ENCODE measurements at regions of chr12 and their contacts with region 1.

Region 1: DNA sequence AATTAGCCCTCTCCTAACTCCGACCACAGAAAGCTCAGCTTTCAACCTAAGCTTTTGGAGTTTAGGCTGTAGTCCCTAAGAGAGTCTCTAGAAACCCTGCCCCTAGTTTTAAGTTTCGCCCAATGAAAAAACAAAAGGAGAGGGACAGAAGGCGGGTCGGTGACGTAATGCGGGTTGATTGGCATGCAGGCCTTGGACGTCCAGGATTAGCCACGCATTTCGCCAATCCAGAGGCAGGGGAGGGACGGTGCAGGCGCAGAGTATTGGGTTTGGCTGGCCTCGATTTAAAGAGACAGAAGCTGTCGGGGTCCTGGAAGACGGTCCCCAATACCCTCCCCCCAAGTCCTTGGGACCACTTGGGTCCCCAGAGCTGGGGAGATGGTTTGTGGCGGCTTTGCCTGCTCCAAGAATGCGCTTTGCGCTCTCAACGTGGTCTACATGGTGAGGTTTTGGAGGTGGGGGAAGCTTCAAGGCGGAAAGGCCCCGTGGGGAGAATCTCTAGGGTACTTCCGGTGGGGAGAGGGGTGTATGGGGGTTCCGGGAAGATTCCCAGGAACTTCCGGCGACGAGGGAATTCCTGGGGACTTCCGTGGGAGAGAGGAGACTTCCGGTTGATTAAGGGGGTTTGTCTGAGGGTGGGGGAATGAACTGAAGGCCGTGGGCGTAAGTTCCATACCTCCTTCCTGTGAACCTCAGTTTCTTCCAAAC is at the start of gene TSPAN31:
- DNase-seq: peak; percentile 90
- H3K4me3 Mint-ChIP-seq: peak within 1 kb of the TSS; percentile 94
- H3K27ac Mint-ChIP-seq: peak within 1 kb of the TSS; percentile 92
- H3K4me1 Mint-ChIP-seq: peaks cover 63% of the 10 kb centered on the region
- H3K27me3 Mint-ChIP-seq: no peaks in the 10 kb centered on the region
- total RNA-seq, gene TSPAN31: 24.0 and 24.5 TPM in 2 replicates

Region 2: GRCh38 chr12:57546438-57547383 is 198.2 kb before region 1 on chr12 and contains the start of gene DCTN2:
- intact Hi-C with region 1: loop called (anchors 2 kb)
- DNase-seq: peak; percentile 93
- H3K4me3 Mint-ChIP-seq: peak within 1 kb of the TSS; percentile 100
- H3K27ac Mint-ChIP-seq: peak within 1 kb of the TSS; percentile 97
- H3K4me1 Mint-ChIP-seq: peaks cover 49% of the 10 kb centered on the region
- H3K27me3 Mint-ChIP-seq: peaks cover 13% of the 10 kb centered on the region
- total RNA-seq, gene DCTN2: 78.6 and 83.5 TPM in 2 replicates

Region 3: DNA sequence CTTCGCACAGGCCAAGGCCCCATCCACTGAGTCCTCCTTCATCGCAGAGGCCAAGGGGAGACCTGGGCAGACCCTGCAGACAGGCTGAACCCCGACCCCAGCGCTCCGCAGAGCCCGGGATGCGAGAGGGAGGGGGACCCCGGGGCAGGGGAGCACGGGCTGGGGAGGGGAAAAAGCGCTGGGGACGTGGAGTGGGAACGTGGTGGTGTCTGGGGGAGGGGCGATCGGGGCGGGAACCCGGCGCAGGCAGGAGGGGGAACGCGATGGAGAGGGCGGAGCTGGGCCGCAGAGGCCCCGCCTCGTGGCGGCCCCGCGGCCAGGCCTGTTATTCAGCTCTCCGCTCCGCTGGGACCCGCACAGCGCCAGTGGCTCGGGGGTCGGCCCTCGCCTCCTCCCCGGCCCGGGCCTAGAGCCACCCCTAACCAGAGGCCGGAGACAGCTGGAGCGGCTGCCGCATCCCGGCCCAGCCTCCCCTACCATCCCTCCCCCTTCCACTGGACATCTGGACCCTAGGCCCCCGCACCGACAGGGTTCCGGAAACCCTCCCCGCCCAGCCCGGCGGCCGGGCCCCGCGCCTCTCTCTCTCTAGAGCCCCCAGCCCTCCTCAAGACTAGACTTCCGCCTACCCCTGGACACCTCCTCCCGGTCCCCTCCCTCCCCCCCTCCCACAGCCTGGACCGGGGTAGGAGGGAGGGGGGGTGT is 133.7 kb before region 1 on chr12 and contains the start of gene ARHGEF25:
- intact Hi-C with region 1: loop called (anchors 5 kb)
- DNase-seq: no peak
- H3K4me3 Mint-ChIP-seq: peak within 1 kb of the TSS; percentile 75
- H3K27ac Mint-ChIP-seq: peak within 1 kb of the TSS; percentile 43
- H3K4me1 Mint-ChIP-seq: peaks cover 5% of the 10 kb centered on the region
- H3K27me3 Mint-ChIP-seq: peaks cover 41% of the 10 kb centered on the region
- total RNA-seq, gene ARHGEF25: 0.60 and 1.5 TPM in 2 replicates

Region 4: DNA sequence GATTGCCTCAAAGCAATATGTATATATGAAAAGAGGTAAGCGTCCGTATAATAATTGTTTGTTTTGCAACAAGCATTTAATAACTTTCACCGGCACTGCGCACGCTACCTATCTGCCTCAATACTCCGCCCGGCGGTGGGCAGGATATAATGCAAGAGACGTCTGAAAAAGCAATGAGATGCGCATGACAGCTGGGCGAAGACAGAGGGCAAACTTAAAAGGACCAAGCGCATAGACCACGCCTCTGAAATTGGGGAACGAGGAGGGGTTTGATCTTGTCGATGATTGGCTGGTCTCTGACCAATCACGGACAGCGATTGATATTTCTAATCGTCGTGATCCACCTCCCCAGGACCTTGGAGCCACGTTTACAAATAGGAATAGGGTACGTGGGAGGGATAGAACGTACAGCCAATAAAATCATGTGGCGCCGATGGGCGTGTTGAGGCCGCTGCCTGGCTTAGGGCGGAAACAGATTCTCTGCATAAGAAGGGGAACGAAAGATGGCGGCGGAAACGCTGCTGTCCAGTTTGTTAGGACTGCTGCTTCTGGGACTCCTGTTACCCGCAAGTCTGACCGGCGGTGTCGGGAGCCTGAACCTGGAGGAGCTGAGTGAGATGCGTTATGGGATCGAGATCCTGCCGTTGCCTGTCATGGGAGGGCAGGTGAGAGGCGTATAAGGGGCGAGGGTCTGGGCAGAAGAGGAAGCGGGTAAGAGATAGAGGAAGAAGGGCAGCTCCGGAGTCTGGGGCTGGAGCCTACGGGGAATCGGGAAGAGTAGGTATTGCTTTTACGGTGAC is 51.1 kb before region 1 on chr12 and contains the start of gene OS9:
- intact Hi-C with region 1: loop called (anchors 1 kb)
- DNase-seq: peak; percentile 95
- H3K4me3 Mint-ChIP-seq: no peak within 1 kb of the TSS
- H3K27ac Mint-ChIP-seq: no peak within 1 kb of the TSS
- H3K4me1 Mint-ChIP-seq: no peaks in the 10 kb centered on the region
- H3K27me3 Mint-ChIP-seq: peaks cover 19% of the 10 kb centered on the region
- total RNA-seq, gene OS9: 99.6 and 100.0 TPM in 2 replicates

Region 5: DNA sequence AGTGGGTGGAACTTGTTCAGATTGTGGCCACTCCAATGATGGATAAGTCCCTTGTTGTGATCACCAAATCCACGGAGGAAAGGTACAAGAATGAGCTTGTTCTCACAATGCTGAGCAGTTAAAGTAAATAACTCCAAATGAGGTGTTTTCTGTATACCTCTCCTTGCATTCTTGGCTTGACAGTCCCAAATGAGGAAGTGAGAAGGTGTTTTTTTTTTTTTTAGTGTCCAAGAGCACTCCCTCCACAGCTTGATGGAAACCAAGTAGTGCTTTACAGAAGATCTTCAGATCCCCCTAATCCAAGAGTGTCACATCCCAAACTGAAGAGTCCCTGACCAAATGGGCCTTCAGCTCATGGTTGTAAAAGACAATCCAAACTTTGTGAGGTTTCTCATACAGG is 350.1 kb after region 1 on chr12:
- intact Hi-C with region 1: no loop called
- DNase-seq: no peak
- H3K4me3 Mint-ChIP-seq: no peak overlapping the region
- H3K27ac Mint-ChIP-seq: no peak overlapping the region
- H3K4me1 Mint-ChIP-seq: no peaks in the 10 kb centered on the region
- H3K27me3 Mint-ChIP-seq: peaks cover 8% of the 10 kb centered on the region

Region 6: DNA sequence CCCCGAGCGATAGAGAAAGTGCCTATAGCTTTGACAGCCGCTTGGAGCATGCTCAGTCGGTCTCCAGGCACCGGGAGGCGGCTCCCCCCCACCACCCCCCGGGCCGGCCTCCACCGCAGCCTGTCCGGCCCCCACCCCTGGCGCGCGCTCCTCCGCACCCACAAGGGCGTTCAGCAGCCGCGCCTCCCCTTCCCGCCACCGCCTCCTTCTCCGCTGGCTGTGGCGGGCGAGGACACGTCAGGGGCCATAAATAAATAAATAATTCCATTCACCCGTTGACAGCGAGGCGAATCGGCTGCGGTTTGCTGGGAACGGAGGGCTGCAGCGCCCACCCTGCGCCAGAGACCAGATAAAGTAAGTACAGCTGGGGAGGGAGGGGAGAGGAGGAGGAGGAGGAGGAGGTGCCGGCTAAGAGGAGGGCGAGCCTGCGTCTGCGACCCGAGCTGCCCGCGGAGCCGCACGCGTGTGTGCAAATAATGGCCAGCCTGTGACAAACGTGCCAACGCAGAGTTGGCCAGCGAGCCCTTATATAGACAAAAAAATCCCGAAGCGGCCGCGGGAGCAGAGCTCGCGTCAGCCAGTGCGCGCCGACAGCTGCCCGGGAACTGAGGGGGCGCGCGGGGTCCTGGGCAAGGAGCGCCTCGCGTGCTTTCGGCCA is 1851.1 kb after region 1 on chr12 and contains the start of gene SLC16A7:
- intact Hi-C with region 1: loop called (anchors 5 kb)
- DNase-seq: peak; percentile 67
- H3K4me3 Mint-ChIP-seq: peak within 1 kb of the TSS; percentile 96
- H3K27ac Mint-ChIP-seq: peak within 1 kb of the TSS; percentile 100
- H3K4me1 Mint-ChIP-seq: peaks cover 46% of the 10 kb centered on the region
- H3K27me3 Mint-ChIP-seq: no peaks in the 10 kb centered on the region
- total RNA-seq, gene SLC16A7: 38.7 and 40.0 TPM in 2 replicates

Measured in activated T-helper 1 cell treated with anti-CD3 and anti-CD28 coated beads, Interleukin-12 subunit alpha, Interleukin-12 subunit beta, Interleukin-2, Interleukin-4 antibody, amounts not matched to agents 30 ng/mL and 10 ng/mL and 1 ng/mL, durations not matched to agents 14 hours and 24 hours and 36 hours (primary cell).